ENCODE measurements at regions of chr11 and their contacts with region 1.

Region 1: DNA sequence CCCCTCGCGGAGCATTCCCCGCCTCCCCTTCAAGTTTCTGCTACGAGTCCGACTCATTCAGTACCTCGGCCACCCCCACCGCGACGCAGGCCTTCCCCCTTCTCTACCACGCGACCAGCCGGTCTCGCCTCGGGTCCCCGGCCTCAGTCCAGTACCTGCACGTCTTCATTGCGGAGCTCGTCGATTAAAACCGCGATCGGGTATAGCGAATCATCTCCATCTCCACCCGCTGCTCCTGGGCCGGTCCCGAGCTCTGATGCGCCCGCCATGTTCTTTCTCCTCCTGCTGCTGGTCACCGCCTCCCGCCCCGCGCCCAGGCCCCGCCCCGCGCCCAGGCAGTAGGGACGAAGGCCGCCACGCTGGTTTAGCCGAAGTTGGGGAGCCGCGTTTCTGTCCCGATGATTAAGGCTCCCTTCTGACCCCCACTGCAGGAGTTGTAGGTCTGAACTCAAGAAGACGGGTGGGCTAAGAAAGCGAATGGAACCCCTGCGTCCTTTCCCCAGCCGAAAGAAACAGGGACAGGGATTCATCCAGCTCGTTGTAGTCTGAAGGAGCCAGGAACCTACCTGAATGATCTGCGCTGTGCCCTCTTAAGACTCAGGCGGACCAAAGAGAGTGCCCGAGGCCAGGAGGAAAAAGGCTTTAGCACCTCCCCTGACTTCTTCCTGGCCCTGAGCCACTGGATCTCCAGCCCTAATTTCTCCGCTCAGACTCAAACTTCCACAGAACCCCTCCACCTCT is at the start of gene PPP2R1B:
- H3K4me3 ChIP-seq: peak within 1 kb of the TSS; percentile 99
- H3K27ac ChIP-seq: peak within 1 kb of the TSS; percentile 33; the same call in 1 of the 2 replicates
- H3K4me1 ChIP-seq: no peaks in the 10 kb centered on the region
- CTCF ChIP-seq: no peak

Region 2: DNA sequence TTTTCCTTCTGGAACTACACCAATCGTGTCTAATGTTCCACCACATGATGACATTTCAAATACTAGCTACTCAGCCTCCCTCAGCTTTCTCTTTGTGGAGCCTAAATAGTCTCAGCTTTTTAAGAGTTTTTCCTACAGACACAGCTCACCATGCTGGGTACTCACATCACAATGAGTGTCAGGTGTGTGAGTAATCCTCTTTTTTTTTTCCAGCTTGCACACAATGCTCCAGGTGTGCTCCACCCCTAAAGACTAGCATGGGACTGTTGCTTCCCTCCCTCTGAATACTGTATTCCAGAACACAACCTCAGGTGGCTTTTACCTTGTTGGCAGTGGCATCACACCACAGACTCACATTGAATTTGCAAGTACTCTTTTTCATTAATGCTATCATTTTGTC is 265.8 kb before region 1 on chr11:
- CTCF ChIA-PET with region 1: no interaction called
- POLR2A ChIA-PET with region 1: no interaction called
- H3K4me3 ChIP-seq: no peak overlapping the region
- H3K27ac ChIP-seq: no peak overlapping the region
- H3K4me1 ChIP-seq: no peaks in the 10 kb centered on the region
- CTCF ChIP-seq: no peak

Region 3: DNA sequence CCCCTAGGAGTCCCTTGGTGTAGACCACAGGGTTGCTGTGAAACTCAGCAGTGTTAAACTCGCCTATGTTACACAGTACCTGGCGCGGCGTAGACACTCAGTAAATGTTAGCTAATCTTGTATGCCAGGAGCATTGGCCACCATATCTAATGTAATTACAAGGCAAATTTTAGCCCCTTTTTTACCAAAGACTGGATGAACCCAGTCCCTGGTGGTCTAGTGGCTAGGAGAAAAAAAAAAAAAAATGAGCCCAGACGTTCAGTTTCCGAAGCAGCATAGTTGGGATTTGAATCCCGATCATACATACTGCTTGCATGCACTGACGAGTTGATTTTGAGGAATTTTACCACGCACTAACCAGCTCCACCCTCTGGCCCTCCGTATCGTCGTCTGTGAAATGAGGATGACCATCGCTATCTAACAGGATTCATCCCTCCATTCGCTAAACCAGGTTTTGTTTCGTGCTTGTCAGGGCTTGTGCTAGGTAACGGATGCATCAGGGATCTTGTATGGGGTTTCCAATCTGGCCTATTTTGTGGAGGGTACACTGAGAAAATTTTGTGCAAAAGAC is 460.7 kb after region 1 on chr11:
- CTCF ChIA-PET with region 1: interaction called, 10 read pairs
- POLR2A ChIA-PET with region 1: no interaction called
- H3K4me3 ChIP-seq: peak overlapping the region; percentile 88
- H3K27ac ChIP-seq: peak overlapping the region; percentile 81; the same call in 1 of the 2 replicates
- H3K4me1 ChIP-seq: no peaks in the 10 kb centered on the region
- CTCF ChIP-seq: no peak

Measured in HEK293 (cell line).